ENCODE measurements at regions of chr11 and their contacts with region 1.

Region 1: GRCh38 chr11:122505304-122506006 is 150.1 kb upstream of the UBASH3B start:
- DNase-seq: peak; percentile 69
- ATAC-seq: peak; percentile 80
- H3K4me3 Mint-ChIP-seq: no peak overlapping the region
- H3K27ac Mint-ChIP-seq: no peak overlapping the region
- H3K4me1 Mint-ChIP-seq: no peaks in the 10 kb centered on the region
- H3K27me3 Mint-ChIP-seq: peaks cover 33% of the 10 kb centered on the region
- CTCF ChIP-seq: peak; percentile 67

Region 2: DNA sequence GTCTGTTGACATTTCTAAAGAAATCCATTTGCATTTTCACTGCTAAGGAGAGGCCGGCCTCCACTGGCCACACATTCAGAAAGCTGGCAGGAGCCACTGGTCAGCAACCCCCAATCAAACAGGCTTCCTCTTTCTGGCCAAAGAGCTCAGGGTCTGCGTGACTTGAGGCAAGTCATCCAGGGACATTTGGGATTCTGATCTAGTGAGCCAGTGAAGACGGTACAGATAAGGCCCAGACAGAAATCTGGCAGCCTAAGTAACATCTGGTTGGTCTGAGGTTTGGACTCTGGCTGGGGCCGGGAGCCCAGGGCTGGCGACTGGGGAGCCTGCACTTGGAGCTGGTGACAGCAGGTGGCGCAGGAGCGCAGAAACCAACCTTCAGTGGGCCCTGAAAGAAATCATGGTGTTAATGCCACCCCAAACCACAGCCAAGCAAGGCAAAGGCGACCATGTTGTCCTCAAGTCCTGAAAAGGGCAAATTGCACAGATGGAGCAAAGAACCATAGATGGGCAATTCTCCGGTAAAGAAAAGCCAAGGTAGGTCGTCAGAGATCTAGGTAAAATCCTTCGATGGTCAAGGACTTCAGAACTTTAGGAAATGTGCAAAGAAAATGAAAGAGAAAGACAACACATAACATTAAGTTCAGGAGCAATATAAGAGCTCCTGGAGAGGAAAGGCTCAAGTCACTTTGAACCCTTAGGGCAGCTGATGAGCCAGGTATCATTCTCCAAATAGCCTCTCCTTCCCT is 290.0 kb before region 1 on chr11:
- CTCF ChIA-PET with region 1: interaction called, 29 read pairs
- POLR2A ChIA-PET with region 1: interaction called, 3 read pairs
- intact Hi-C with region 1: loop called (anchors 5 kb)
- DNase-seq: peak; percentile 48
- ATAC-seq: peak; percentile 37
- H3K4me3 Mint-ChIP-seq: no peak overlapping the region
- H3K27ac Mint-ChIP-seq: no peak overlapping the region
- H3K4me1 Mint-ChIP-seq: no peaks in the 10 kb centered on the region
- H3K27me3 Mint-ChIP-seq: peaks cover 4% of the 10 kb centered on the region
- CTCF ChIP-seq: peak; percentile 81

Measured in activated CD8-positive, alpha-beta T cell treated with anti-CD3 and anti-CD28 coated beads for 36 hours (primary cell).